A673 (cell line): ENCODE measurements at regions of chr14 and their contacts with region 1.

Region 1: GRCh38 chr14:86714153-86714552 is 1184.2 kb downstream of the FLRT2 start:
- DNase-seq: no peak
- H3K4me3 ChIP-seq: no peak overlapping the region
- H3K27ac ChIP-seq: no peak overlapping the region
- H3K4me1 ChIP-seq: peaks cover 7% of the 10 kb centered on the region
- H3K27me3 ChIP-seq: no peaks in the 10 kb centered on the region
- CTCF ChIP-seq: no peak

Region 2: DNA sequence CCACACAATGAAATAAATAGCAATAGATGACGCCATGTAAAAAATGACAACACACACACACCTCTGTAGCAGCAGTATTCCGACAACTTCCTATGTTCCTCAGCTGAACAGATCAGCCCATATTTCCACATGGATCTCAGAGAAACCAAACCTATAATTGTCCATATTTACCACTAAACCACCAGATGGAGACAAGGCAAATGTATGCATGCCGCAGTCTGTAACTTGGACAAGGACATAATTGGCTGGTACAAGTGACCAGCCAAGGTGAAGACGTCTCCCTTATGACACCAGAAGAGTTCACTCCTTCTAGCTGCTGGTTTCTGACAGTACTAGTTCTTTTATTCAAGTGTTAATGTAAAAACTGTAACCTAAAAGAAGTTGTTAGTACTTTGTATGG is 497.8 kb before region 1 on chr14:
- CTCF ChIA-PET with region 1: no interaction called
- POLR2A ChIA-PET with region 1: no interaction called
- intact Hi-C with region 1: no loop called
- DNase-seq: no peak
- H3K4me3 ChIP-seq: no peak overlapping the region
- H3K27ac ChIP-seq: no peak overlapping the region
- H3K4me1 ChIP-seq: no peaks in the 10 kb centered on the region
- H3K27me3 ChIP-seq: no peaks in the 10 kb centered on the region
- CTCF ChIP-seq: peak; percentile 33; the same call in 1 of the 2 replicates

Region 3: GRCh38 chr14:86739761-86740160 is 25.6 kb after region 1 on chr14:
- CTCF ChIA-PET with region 1: no interaction called
- POLR2A ChIA-PET with region 1: no interaction called
- intact Hi-C with region 1: loop called (anchors 2 kb)
- DNase-seq: no peak
- H3K4me3 ChIP-seq: no peak overlapping the region
- H3K27ac ChIP-seq: no peak overlapping the region
- H3K4me1 ChIP-seq: no peaks in the 10 kb centered on the region
- H3K27me3 ChIP-seq: no peaks in the 10 kb centered on the region
- CTCF ChIP-seq: no peak